Activated CD4-positive, alpha-beta memory T cell treated with anti-CD3 and anti-CD28 coated beads for 36 hours (primary cell): ENCODE measurements at regions of chr1 and their contacts with region 1.

Region 1: DNA sequence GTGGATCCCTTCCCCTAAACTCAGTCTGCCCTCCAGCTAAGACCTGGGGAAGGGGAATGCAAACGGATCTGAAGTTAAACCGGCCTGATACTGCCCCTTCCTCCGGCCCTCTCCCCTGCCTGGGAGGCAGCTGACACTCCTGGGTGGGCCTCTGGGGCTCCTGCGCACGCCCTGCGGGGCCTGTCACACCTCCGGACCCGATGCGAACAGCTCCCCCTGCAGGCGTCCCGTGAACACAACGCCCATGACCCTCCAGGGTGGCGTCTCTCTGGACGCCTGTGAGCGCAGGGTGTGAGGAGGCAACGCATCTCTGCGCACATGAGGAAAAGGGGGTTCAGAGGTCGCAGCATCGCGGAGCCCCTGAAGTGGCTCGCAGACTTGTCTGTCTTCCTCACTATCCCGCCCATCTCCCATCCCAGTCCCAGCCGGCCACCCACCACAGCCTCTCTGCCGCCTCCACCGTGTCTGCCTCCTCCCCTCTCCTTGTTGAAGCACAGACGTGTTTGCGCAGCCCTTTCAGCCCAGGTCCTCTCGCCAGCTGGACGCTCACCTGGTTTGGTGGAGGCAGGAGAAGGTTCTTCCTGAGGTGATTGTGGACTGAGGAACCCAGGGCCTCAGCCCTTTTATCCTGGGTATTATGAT is 421 bp upstream of the LCE3A start:
- DNase-seq: peak; percentile 44
- H3K4me3 Mint-ChIP-seq: no peak overlapping the region
- H3K27ac Mint-ChIP-seq: no peak overlapping the region
- H3K4me1 Mint-ChIP-seq: peaks cover 2% of the 10 kb centered on the region
- H3K27me3 Mint-ChIP-seq: peaks cover 27% of the 10 kb centered on the region

Region 2: GRCh38 chr1:152502496-152503180 is 120.7 kb before region 1 on chr1:
- CTCF ChIA-PET with region 1: no interaction called
- POLR2A ChIA-PET with region 1: no interaction called
- intact Hi-C with region 1: no loop called
- DNase-seq: no peak
- H3K4me3 Mint-ChIP-seq: no peak overlapping the region
- H3K27ac Mint-ChIP-seq: no peak overlapping the region
- H3K4me1 Mint-ChIP-seq: no peaks in the 10 kb centered on the region
- H3K27me3 Mint-ChIP-seq: peaks cover 6% of the 10 kb centered on the region

Region 3: GRCh38 chr1:152577168-152577567 is 46.2 kb before region 1 on chr1:
- CTCF ChIA-PET with region 1: interaction called, 6 read pairs
- POLR2A ChIA-PET with region 1: interaction called, 4 read pairs
- intact Hi-C with region 1: loop called (anchors 2 kb)
- DNase-seq: peak; percentile 48
- H3K4me3 Mint-ChIP-seq: no peak overlapping the region
- H3K27ac Mint-ChIP-seq: no peak overlapping the region
- H3K4me1 Mint-ChIP-seq: no peaks in the 10 kb centered on the region
- H3K27me3 Mint-ChIP-seq: peaks cover 33% of the 10 kb centered on the region